Caco-2 (cell line): ENCODE measurements at regions of chr17 and their contacts with region 1.

Region 1: GRCh38 chr17:36784633-36785032 is 152.6 kb upstream of the LHX1 start:
- DNase-seq: no peak
- H3K4me3 ChIP-seq: no peak overlapping the region
- H3K4me3 Mint-ChIP-seq: no peak overlapping the region
- H3K27ac Mint-ChIP-seq: no peak overlapping the region
- H3K4me1 ChIP-seq: 0 out of 2 replicates have a peak, but pooled peaks cover 6% of the 10 kb centered on the region
- H3K4me1 Mint-ChIP-seq: peaks cover 8% of the 10 kb centered on the region
- H3K27me3 ChIP-seq: no peaks in the 10 kb centered on the region
- H3K27me3 Mint-ChIP-seq: peaks cover 3% of the 10 kb centered on the region
- CTCF ChIP-seq: no peak

Region 2: GRCh38 chr17:36722121-36722902 is 62.3 kb before region 1 on chr17:
- CTCF ChIA-PET with region 1: no interaction called
- POLR2A ChIA-PET with region 1: no interaction called
- intact Hi-C with region 1: loop called (anchors 10 kb)
- DNase-seq: peak in 1 of 2 experiments; percentile 24
- H3K4me3 ChIP-seq: no peak overlapping the region
- H3K4me3 Mint-ChIP-seq: peak overlapping the region; percentile 25
- H3K27ac Mint-ChIP-seq: no peak overlapping the region
- H3K4me1 ChIP-seq: no peaks in the 10 kb centered on the region
- H3K4me1 Mint-ChIP-seq: no peaks in the 10 kb centered on the region
- H3K27me3 ChIP-seq: peaks cover 3% of the 10 kb centered on the region; the same call in 1 of the 2 replicates
- H3K27me3 Mint-ChIP-seq: peaks cover 27% of the 10 kb centered on the region
- CTCF ChIP-seq: no peak